ENCODE measurements at regions of chr17 and their contacts with region 1.

Region 1: GRCh38 chr17:9880582-9880999 is 24.5 kb downstream of the RCVRN start:
- DNase-seq: peak; percentile 83
- ATAC-seq: peak; percentile 96
- H3K4me3 ChIP-seq: no peak overlapping the region
- H3K27ac ChIP-seq: peak overlapping the region; percentile 74
- H3K4me1 ChIP-seq: peaks cover 26% of the 10 kb centered on the region
- H3K27me3 ChIP-seq: no peaks in the 10 kb centered on the region
- CTCF ChIP-seq: no peak

Region 2: DNA sequence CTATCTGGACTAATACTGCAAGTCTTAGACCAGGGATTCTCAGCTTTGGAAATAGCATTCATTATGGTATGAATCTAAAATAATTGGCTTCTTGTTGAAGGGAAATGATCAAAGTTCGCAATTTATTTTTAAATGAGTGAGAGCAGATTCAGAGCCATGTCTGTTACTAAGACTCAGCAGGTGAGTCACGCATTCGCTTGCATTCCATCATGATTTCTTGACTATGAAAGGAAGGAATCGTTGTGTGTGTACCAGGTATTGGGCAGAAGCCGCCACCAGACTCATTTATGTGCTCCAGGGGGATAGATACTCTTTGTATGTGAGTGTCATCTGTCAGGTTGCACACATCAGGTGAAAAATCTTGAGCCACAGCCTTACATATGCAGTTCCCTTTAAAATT is 69.5 kb before region 1 on chr17:
- CTCF ChIA-PET with region 1: no interaction called
- POLR2A ChIA-PET with region 1: no interaction called
- intact Hi-C with region 1: loop called (anchors 5 kb)
- DNase-seq: peak; percentile 82
- ATAC-seq: peak; percentile 87
- H3K4me3 ChIP-seq: peak overlapping the region; percentile 33; the same call in 1 of the 2 replicates
- H3K27ac ChIP-seq: peak overlapping the region; percentile 92
- H3K4me1 ChIP-seq: peaks cover 24% of the 10 kb centered on the region
- H3K27me3 ChIP-seq: no peaks in the 10 kb centered on the region
- CTCF ChIP-seq: no peak

Region 3: DNA sequence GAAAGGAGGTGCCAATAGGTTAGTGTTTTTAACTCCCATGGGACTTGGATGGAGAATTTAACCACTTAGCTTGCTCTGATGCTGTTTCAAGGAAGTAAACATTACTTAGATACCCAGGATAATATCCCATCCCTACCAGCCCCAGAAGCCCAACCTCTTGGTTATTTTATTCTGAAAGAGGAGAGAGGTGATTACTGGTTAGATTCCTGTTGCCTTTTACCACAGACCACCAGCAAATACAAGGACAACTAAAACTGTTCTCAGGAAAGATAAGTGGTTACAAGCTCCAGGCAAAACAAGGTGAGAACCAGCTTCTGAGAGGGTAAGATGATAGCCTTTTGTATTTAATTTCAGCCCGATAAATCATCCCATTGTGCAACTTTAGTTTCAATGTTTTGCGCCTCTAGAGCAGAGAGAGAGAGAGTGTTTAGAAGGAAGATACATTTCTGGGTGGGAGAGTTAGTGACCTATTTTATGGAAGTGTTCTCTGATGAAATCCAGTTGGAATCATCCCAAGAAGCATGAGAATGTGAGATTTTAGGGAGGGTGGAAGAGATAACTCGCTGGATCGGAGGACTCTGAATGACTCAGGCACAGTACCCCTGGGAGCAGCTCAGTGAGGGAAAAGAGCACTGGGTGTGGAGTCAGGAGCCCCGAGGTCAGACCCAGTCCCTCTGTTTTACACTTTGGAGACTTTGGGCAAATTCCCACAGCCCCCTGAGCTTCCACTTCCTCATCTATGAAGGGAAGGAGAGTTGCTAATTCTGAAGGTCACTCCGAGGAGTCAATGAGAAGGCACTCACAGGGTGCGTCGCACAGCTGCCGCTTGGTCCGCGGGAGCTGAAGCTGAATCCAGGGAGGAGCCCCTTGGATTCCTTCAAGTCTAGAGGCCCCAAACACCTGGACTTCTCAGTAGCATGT is 42.8 kb before region 1 on chr17:
- CTCF ChIA-PET with region 1: no interaction called
- POLR2A ChIA-PET with region 1: no interaction called
- intact Hi-C with region 1: loop called (anchors 5 kb)
- DNase-seq: peak; percentile 90
- ATAC-seq: peak; percentile 20
- H3K4me3 ChIP-seq: peak overlapping the region; percentile 11; the same call in 1 of the 2 replicates
- H3K27ac ChIP-seq: peak overlapping the region; percentile 88
- H3K4me1 ChIP-seq: peaks cover 44% of the 10 kb centered on the region
- H3K27me3 ChIP-seq: no peaks in the 10 kb centered on the region
- CTCF ChIP-seq: no peak

Region 4: GRCh38 chr17:9862220-9862619 is 18.4 kb before region 1 on chr17:
- CTCF ChIA-PET with region 1: no interaction called
- POLR2A ChIA-PET with region 1: no interaction called
- intact Hi-C with region 1: no loop called
- DNase-seq: peak; percentile 11
- ATAC-seq: no peak; the same call in 1 of the 2 replicates
- H3K4me3 ChIP-seq: no peak overlapping the region
- H3K27ac ChIP-seq: no peak overlapping the region
- H3K4me1 ChIP-seq: no peaks in the 10 kb centered on the region
- H3K27me3 ChIP-seq: no peaks in the 10 kb centered on the region
- CTCF ChIP-seq: no peak